ENCODE measurements at regions of chr7 and their contacts with region 1.

Region 1: DNA sequence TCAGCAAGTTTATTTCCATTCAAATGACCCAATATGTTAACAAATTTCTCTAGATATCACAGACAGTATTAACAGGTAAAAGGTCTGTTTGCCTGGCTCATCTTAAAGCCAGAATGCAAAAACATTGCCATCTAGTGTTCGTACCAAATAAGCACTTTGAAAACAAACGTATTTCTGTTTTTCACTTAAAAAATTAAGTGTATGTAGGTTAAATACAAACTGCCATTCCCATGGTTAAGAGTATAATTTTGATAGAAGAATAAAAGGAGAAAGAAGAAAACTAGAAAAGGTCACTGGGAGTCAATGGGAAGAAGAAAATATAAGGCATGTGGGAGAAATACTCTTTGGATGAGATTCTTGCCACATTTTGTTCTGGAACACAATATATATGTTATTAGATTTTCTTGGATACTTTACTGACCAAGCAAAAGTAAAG is 51.0 kb downstream of the ORC5 start:
- DNase-seq: peak; percentile 12
- H3K4me3 ChIP-seq: no peak overlapping the region
- CTCF ChIP-seq: peak; percentile 43

Region 2: GRCh38 chr7:103524042-103524907 is 632.6 kb before region 1 on chr7:
- CTCF ChIA-PET with region 1: interaction called, 17 read pairs
- POLR2A ChIA-PET with region 1: no interaction called
- DNase-seq: peak; percentile 9
- H3K4me3 ChIP-seq: no peak overlapping the region
- CTCF ChIP-seq: peak; percentile 52

Region 3: DNA sequence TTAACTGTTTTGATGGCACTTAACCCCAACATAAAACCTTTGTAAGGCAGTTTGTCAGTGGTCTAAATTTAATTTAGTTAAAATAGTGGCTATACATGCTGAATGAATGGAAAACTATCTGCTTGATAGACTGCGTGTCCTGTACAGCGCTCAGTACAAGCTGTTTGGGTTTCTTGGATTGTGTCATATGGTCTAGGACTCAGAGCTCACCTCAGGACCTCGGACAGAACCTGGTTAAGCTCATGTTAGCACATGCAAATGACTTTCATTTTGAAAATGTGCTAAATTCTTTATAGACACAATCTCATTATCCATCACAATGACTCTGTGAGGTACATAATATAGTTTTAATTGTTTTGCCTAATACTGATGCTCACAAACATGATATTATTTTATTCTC is 111.7 kb before region 1 on chr7:
- CTCF ChIA-PET with region 1: no interaction called
- POLR2A ChIA-PET with region 1: no interaction called
- DNase-seq: no peak
- H3K4me3 ChIP-seq: no peak overlapping the region
- CTCF ChIP-seq: no peak

Region 4: DNA sequence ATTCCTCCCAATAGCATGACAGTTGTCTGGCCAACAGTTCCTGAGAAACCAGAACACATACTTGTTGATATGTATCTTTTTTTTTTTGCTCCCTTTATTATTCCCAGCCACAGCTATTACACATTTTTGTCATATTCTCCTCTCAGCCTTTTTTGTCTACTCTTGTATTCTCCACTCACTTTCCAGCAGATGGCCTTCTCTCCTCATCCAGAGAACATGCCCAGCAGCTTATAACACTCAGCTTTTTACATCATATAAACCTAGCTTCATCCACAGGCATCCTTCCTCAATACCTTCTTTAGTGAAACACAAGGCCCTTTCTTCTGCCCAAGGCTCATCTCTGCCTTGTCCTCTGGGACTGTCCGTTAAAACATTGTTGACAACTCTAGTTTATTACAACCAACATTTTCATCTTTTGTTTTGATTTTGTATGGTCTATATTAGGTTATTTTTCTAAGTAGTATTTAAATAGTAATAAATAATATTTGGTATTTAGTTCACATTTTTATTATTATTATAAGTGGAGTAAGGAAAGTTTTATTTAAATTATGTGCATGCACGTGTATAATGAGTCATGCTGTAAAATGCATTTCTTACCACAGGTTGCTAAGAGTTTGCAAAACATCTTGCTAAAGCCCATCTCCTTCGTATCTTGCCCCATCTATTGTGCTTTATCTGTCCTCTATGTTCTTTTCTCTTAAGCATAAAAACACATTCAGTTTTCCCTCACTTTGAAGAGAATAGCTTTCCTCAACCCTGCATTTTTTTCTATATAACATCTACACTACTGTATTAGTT is 50.6 kb before region 1 on chr7:
- CTCF ChIA-PET with region 1: interaction called, 16 read pairs
- POLR2A ChIA-PET with region 1: no interaction called
- DNase-seq: peak; percentile 4
- H3K4me3 ChIP-seq: no peak overlapping the region
- CTCF ChIP-seq: no peak

Region 5: GRCh38 chr7:104603957-104604356 is 447.1 kb after region 1 on chr7:
- CTCF ChIA-PET with region 1: no interaction called
- POLR2A ChIA-PET with region 1: no interaction called
- DNase-seq: no peak
- H3K4me3 ChIP-seq: no peak overlapping the region
- CTCF ChIP-seq: no peak